B cell (primary cell): ENCODE measurements at regions of chr19 and their contacts with region 1.

Region 1: DNA sequence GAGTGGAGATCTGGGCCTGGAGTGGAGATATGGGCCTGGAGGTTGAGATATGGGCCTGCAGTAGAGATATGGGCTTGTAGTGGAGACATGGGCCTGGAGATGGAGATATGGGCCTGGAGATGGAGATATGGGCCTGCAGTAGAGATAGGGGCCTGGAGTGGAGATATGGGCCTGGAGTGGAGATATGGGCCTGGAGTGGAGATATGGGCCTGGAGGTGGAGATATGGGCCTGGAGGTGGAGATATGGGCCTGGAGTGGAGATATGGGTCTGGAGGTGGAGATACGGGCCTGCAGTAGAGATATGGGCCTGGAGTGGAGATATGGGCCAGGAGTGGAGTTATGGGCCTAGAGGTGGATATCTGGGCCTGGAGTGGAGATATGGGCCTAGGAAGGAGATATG is 402 bp downstream of the KIR2DL3 start:
- DNase-seq: no peak
- ATAC-seq: no peak
- H3K4me3 ChIP-seq: no peak overlapping the region
- H3K4me3 Mint-ChIP-seq: no peak overlapping the region
- H3K27ac ChIP-seq: no peak overlapping the region
- H3K27ac Mint-ChIP-seq: no peak overlapping the region
- H3K4me1 ChIP-seq: no peaks in the 10 kb centered on the region
- H3K4me1 Mint-ChIP-seq: no peaks in the 10 kb centered on the region
- H3K27me3 ChIP-seq: no peaks in the 10 kb centered on the region
- H3K27me3 Mint-ChIP-seq: peaks cover 26% of the 10 kb centered on the region
- CTCF ChIP-seq: no peak

Region 2: GRCh38 chr19:54851353-54851752 is 112.6 kb after region 1 on chr19:
- CTCF ChIA-PET with region 1: no interaction called
- POLR2A ChIA-PET with region 1: no interaction called
- intact Hi-C with region 1: loop called (anchors 2 kb)
- DNase-seq: no peak
- ATAC-seq: no peak
- H3K4me3 ChIP-seq: no peak overlapping the region
- H3K4me3 Mint-ChIP-seq: no peak overlapping the region
- H3K27ac ChIP-seq: no peak overlapping the region
- H3K27ac Mint-ChIP-seq: no peak overlapping the region
- H3K4me1 ChIP-seq: no peaks in the 10 kb centered on the region
- H3K4me1 Mint-ChIP-seq: no peaks in the 10 kb centered on the region
- H3K27me3 ChIP-seq: no peaks in the 10 kb centered on the region
- H3K27me3 Mint-ChIP-seq: peaks cover 29% of the 10 kb centered on the region
- CTCF ChIP-seq: no peak

Region 3: GRCh38 chr19:54893406-54893805 is 154.7 kb after region 1 on chr19:
- CTCF ChIA-PET with region 1: no interaction called
- POLR2A ChIA-PET with region 1: no interaction called
- intact Hi-C with region 1: no loop called
- DNase-seq: no peak
- ATAC-seq: no peak
- H3K4me3 ChIP-seq: no peak overlapping the region
- H3K4me3 Mint-ChIP-seq: no peak overlapping the region
- H3K27ac ChIP-seq: no peak overlapping the region
- H3K27ac Mint-ChIP-seq: no peak overlapping the region
- H3K4me1 ChIP-seq: no peaks in the 10 kb centered on the region
- H3K4me1 Mint-ChIP-seq: no peaks in the 10 kb centered on the region
- H3K27me3 ChIP-seq: no peaks in the 10 kb centered on the region
- H3K27me3 Mint-ChIP-seq: peaks cover 24% of the 10 kb centered on the region
- CTCF ChIP-seq: no peak